ENCODE measurements at regions of chr6 and their contacts with region 1.

Region 1: DNA sequence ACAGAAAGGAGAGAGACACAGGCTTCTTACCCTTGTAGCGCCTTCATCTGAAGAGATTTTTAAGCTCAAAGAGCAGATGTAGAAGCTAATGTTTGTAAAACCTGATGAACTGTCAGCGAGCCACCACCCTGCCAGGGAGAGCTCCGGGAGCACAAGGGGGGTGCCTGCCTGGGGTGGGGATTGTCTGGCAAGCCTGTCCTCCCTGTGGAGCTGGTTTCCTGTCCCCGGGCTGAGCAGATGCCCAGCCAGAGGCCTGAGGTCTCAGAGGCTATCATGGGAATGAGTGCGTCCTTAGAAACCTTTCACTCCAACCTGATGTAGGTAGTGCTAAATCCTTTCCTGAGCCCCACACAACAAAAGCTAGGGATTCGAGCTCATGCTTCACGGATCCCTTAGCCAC is 41.9 kb upstream of the NR2E1 start:
- DNase-seq: no peak
- H3K4me3 ChIP-seq: no peak overlapping the region
- H3K27ac ChIP-seq: no peak overlapping the region
- H3K4me1 ChIP-seq: peaks cover 0 to 5% of the 10 kb centered on the region in 2 donors
- H3K27me3 ChIP-seq: peaks cover 0 to 16% of the 10 kb centered on the region in 2 donors
- CTCF ChIP-seq: no peak
- POLR2A ChIP-seq: no peak

Region 2: GRCh38 chr6:108156560-108157233 is 32.8 kb after region 1 on chr6:
- intact Hi-C with region 1: loop called (anchors 2 kb)
- DNase-seq: no peak
- H3K4me3 ChIP-seq: peak overlapping the region in 1 of 3 donors; percentile 57
- H3K27ac ChIP-seq: no peak overlapping the region
- H3K4me1 ChIP-seq: peaks cover 0 to 10% of the 10 kb centered on the region in 2 donors
- H3K27me3 ChIP-seq: peaks cover 4 to 86% of the 10 kb centered on the region in 2 donors
- CTCF ChIP-seq: no peak
- POLR2A ChIP-seq: no peak